PC-9 (cell line): ENCODE measurements at regions of chr20 and their contacts with region 1.

Region 1: DNA sequence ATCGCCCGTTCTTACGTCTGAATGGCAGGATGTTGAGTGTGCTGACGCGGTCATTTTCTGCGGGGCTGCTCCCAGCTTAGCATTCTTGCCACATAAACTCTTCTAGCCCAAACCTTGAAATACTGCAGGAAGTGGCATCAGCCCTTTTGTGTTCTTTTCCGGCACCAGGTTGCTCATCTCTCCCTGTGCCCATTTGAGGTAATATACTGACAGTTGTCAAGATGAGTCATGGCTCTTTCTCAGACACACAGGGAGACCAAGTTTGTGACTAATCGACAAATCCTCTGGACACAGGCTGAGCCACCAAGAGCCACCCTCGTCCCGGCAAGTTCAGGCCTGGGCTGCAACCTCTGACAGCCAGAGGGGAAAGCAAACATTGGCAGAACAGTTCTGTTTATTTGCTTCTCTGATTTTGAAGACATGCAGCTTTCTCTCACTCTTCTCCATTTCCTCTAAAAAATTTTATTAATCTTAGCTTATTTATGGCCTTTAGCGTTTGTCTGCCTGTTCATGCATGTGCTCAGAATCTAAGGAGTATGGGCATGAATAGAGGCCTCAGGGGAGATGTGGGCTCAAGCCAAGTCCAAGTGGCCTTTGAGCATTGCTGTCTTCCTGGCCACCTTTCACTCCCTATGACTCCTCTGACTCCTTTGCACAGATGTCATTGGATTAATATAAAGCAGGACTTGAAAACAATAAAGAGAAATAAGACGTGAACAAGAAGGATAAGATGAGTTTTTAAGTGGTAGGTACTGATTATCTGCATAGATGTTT is 328.2 kb upstream of the JAG1 start:
- DNase-seq: peak; percentile 79 to 96
- H3K4me3 ChIP-seq: no peak overlapping the region
- H3K27ac ChIP-seq: peak overlapping the region; percentile 94
- H3K4me1 ChIP-seq: peaks cover 27% of the 10 kb centered on the region
- H3K27me3 ChIP-seq: no peaks in the 10 kb centered on the region
- CTCF ChIP-seq: no peak

Region 2: DNA sequence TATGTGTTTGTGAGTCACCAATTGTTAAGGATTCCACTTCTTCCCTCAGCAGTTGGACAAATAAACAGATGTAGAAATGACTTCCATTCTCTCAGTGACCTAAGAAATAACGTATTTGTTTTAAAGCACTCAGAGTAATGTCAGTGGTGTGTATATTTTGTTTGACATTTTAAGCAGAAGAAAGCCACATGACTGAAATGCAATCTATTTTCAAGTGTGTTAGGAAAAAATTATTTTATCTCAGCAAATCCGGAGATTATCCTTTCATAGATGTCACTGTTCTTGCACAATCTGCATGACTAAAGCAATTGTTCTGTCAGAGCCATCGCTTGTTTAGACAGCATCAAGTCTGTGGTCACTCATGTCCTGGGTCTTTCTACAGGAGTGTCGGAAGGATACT is 405.2 kb before region 1 on chr20:
- CTCF ChIA-PET with region 1: no interaction called
- POLR2A ChIA-PET with region 1: no interaction called
- intact Hi-C with region 1: loop called (anchors 5 kb)
- DNase-seq: no peak
- H3K4me3 ChIP-seq: no peak overlapping the region
- H3K27ac ChIP-seq: no peak overlapping the region
- H3K4me1 ChIP-seq: peaks cover 38% of the 10 kb centered on the region
- H3K27me3 ChIP-seq: no peaks in the 10 kb centered on the region
- CTCF ChIP-seq: no peak

Region 3: DNA sequence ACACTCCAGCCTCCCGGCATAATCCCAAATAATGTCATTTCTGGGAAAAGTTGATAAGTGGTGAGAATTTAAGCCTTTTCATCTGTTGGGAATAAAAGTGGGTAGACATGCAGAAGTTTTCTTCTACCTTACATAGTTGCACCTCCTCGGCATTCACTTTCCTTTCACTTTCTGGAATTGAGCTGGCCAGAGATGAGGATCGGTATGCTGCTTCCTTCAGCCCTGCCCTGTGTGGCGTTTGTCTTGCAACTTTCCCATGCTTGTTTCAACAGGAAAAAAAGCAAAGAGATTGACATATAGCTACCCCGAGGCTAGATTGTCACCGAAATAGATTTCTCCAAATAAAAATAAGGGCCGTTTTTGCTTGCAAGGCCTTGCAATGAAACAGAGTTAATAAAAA is 262.4 kb before region 1 on chr20:
- CTCF ChIA-PET with region 1: interaction called, 19 read pairs
- POLR2A ChIA-PET with region 1: no interaction called
- intact Hi-C with region 1: no loop called
- DNase-seq: peak in 1 of 2 experiments; percentile 32
- H3K4me3 ChIP-seq: no peak overlapping the region
- H3K27ac ChIP-seq: no peak overlapping the region
- H3K4me1 ChIP-seq: 0 out of 2 replicates have a peak, but pooled peaks cover 11% of the 10 kb centered on the region
- H3K27me3 ChIP-seq: no peaks in the 10 kb centered on the region
- CTCF ChIP-seq: no peak

Region 4: DNA sequence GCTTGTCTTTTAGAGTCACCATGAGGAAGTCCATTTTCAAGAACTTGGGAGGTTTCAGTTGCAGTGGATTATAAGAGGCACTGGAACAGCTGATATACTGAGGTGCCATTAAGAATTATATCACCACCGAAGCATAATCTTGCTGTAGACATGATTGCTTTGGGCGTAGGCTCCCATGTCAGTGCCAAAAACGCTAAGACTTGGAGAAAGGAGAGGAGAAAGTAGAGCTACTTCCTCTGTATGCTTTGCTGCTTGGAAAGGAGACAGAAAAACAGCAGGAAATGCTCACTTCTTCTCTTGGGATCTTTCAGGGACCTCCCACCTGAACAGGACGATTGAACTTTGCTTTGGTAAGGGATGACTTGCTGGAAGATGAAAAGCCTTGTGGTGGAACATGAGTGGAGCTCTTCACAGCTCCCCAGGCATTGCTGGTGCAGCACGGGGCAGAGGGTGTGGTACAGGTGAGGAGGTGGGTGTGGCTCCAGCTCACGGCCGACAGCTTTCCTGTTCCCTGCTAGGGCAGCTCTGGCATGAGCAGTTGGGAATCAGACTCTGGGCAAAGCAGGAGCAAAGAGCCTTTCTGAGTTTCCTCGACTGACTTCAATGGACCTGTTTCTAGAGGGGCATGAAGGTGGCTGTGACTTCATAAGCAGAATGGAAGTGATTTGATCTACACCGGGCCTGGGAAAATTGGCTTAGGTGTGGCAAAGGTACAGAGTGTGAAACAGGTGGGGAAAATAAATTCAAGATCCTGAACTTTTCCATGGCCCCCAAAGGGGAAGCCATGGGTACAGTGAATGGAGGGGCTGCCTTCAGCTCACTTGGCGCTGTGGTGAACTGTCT is 137.7 kb before region 1 on chr20:
- CTCF ChIA-PET with region 1: no interaction called
- POLR2A ChIA-PET with region 1: no interaction called
- intact Hi-C with region 1: loop called (anchors 5 kb)
- DNase-seq: peak; percentile 65 to 81
- H3K4me3 ChIP-seq: peak overlapping the region; percentile 10; the same call in 1 of the 2 replicates
- H3K27ac ChIP-seq: peak overlapping the region; percentile 75
- H3K4me1 ChIP-seq: peaks cover 42% of the 10 kb centered on the region
- H3K27me3 ChIP-seq: no peaks in the 10 kb centered on the region
- CTCF ChIP-seq: no peak

Region 5: GRCh38 chr20:11153819-11154218 is 151.9 kb after region 1 on chr20:
- CTCF ChIA-PET with region 1: no interaction called
- POLR2A ChIA-PET with region 1: no interaction called
- intact Hi-C with region 1: no loop called
- DNase-seq: peak in 1 of 2 experiments; percentile 36
- H3K4me3 ChIP-seq: no peak overlapping the region
- H3K27ac ChIP-seq: no peak overlapping the region
- H3K4me1 ChIP-seq: 0 out of 2 replicates have a peak, but pooled peaks cover 5% of the 10 kb centered on the region
- H3K27me3 ChIP-seq: no peaks in the 10 kb centered on the region
- CTCF ChIP-seq: no peak

Region 6: GRCh38 chr20:11274141-11274594 is 272.2 kb after region 1 on chr20:
- CTCF ChIA-PET with region 1: no interaction called
- POLR2A ChIA-PET with region 1: no interaction called
- intact Hi-C with region 1: loop called (anchors 5 kb)
- DNase-seq: peak; percentile 30 to 61
- H3K4me3 ChIP-seq: no peak overlapping the region
- H3K27ac ChIP-seq: no peak overlapping the region
- H3K4me1 ChIP-seq: peaks cover 3% of the 10 kb centered on the region; the same call in 1 of the 2 replicates
- H3K27me3 ChIP-seq: no peaks in the 10 kb centered on the region
- CTCF ChIP-seq: peak; percentile 76